GM13976 (cell line): ENCODE measurements at regions of chr4 and their contacts with region 1.

Region 1: GRCh38 chr4:48490012-48490679 is at the start of gene ZAR1:
- DNase-seq: peak; percentile 62
- CTCF ChIP-seq: no peak

Region 2: GRCh38 chr4:48439988-48440387 is 50.2 kb before region 1 on chr4:
- in situ Hi-C with region 1: loop called (anchors 10 kb)
- DNase-seq: no peak
- CTCF ChIP-seq: no peak